AG04449 (cell line): ENCODE measurements at regions of chr5 and their contacts with region 1.

Region 1: DNA sequence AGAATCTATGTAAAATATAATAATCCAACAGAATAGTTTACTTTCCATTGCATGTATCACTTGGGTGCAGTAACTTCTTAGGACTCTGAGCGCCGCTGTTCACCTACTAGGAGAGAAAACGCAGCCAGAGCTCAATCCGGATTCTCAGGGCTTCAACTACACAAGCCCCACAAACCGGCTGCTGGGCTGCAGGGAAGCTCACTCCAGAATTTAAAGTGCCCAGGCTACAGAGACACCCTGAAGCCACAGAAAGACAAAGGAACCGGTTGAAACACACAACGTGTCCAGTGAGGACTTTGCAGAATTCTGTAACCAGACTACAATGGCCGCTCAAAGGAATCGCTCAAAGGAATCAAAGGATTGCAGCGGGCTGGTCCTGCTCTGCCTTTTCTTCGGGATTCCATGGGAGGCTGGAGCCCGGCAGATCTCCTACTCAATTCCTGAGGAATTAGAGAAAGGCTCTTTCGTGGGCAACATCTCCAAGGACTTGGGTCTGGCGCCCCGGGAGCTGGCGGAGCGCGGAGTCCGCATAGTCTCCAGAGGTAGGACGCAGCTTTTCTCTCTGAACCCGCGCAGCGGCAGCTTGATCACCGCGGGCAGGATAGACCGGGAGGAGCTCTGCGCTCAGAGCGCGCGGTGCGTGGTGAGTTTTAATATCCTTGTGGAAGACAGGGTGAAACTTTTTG is at the start of gene PCDHGA10:
- DNase-seq: no peak
- H3K4me3 ChIP-seq: peak within 1 kb of the TSS; percentile 53
- CTCF ChIP-seq: peak; percentile 48

Region 2: GRCh38 chr5:141320225-141321169 is 92.5 kb before region 1 on chr5 and contains the start of gene TAF7:
- CTCF ChIA-PET with region 1: interaction called, 10 read pairs
- POLR2A ChIA-PET with region 1: no interaction called
- DNase-seq: peak; percentile 63
- H3K4me3 ChIP-seq: peak within 1 kb of the TSS; percentile 85
- CTCF ChIP-seq: peak; percentile 82

Region 3: GRCh38 chr5:141387233-141387949 is 25.6 kb before region 1 on chr5 and contains the start of gene PCDHGB4:
- CTCF ChIA-PET with region 1: interaction called, 11 read pairs
- POLR2A ChIA-PET with region 1: no interaction called
- DNase-seq: no peak
- H3K4me3 ChIP-seq: peak within 1 kb of the TSS; percentile 42
- CTCF ChIP-seq: peak; percentile 33

Region 4: DNA sequence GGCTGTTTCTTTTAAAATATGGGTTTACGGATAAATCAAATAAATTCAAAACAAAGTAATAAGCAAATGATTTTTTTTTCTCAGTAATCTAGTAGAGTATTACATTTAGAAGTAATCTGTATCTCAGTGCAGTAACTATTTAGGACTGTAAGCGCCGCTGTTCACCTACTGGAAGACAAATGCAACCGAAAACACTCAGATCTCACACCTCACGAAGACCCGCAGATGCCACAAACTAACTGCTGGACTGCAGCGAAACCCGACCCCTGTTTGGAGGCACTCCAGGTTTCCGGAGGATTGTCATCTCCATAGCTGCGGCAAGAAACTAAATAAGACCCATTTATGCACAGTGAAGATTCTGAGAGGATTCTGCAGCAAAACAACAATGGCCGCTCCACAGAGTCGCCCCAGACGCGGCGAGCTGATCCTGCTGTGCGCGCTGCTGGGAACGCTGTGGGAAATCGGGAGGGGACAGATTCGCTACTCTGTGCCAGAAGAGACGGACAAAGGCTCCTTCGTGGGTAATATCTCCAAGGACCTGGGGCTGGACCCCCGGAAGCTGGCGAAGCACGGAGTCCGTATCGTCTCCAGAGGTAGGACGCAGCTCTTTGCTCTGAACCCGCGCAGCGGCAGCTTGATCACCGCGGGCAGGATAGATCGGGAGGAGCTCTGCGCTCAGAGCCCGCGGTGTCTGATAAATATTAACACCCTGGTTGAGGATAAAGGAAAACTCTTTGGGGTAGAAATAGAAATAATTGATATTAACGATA is 20.4 kb before region 1 on chr5 and contains the start of gene PCDHGA8:
- CTCF ChIA-PET with region 1: interaction called, 35 read pairs
- POLR2A ChIA-PET with region 1: no interaction called
- DNase-seq: no peak
- H3K4me3 ChIP-seq: 0 out of 2 replicates have a peak within 1 kb of the TSS, but pooled peaks have one; percentile 1
- CTCF ChIP-seq: no peak

Region 5: GRCh38 chr5:141402553-141403260 is 10.3 kb before region 1 on chr5 and contains the start of gene PCDHGA9:
- CTCF ChIA-PET with region 1: interaction called, 35 read pairs
- POLR2A ChIA-PET with region 1: no interaction called
- DNase-seq: no peak
- H3K4me3 ChIP-seq: peak within 1 kb of the TSS; percentile 34
- CTCF ChIP-seq: no peak

Region 6: DNA sequence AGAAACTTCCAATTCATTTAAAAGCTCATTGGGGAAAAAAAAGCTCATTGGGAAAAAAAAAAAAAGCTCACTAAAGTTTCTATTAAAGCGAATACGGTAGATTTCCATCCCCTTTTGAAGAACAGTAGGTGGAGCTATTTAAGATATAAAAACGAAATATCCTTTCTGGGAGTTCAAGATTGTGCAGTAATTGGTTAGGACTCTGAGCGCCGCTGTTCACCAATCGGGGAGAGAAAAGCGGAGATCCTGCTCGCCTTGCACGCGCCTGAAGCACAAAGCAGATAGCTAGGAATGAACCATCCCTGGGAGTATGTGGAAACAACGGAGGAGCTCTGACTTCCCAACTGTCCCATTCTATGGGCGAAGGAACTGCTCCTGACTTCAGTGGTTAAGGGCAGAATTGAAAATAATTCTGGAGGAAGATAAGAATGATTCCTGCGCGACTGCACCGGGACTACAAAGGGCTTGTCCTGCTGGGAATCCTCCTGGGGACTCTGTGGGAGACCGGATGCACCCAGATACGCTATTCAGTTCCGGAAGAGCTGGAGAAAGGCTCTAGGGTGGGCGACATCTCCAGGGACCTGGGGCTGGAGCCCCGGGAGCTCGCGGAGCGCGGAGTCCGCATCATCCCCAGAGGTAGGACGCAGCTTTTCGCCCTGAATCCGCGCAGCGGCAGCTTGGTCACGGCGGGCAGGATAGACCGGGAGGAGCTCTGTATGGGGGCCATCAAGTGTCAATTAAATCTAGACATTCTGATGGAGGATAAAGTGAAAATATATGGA is 17.5 kb after region 1 on chr5 and contains the start of gene PCDHGA12:
- CTCF ChIA-PET with region 1: interaction called, 196 read pairs
- POLR2A ChIA-PET with region 1: no interaction called
- DNase-seq: peak; percentile 52
- H3K4me3 ChIP-seq: peak within 1 kb of the TSS; percentile 49
- CTCF ChIP-seq: peak; percentile 38

Region 7: DNA sequence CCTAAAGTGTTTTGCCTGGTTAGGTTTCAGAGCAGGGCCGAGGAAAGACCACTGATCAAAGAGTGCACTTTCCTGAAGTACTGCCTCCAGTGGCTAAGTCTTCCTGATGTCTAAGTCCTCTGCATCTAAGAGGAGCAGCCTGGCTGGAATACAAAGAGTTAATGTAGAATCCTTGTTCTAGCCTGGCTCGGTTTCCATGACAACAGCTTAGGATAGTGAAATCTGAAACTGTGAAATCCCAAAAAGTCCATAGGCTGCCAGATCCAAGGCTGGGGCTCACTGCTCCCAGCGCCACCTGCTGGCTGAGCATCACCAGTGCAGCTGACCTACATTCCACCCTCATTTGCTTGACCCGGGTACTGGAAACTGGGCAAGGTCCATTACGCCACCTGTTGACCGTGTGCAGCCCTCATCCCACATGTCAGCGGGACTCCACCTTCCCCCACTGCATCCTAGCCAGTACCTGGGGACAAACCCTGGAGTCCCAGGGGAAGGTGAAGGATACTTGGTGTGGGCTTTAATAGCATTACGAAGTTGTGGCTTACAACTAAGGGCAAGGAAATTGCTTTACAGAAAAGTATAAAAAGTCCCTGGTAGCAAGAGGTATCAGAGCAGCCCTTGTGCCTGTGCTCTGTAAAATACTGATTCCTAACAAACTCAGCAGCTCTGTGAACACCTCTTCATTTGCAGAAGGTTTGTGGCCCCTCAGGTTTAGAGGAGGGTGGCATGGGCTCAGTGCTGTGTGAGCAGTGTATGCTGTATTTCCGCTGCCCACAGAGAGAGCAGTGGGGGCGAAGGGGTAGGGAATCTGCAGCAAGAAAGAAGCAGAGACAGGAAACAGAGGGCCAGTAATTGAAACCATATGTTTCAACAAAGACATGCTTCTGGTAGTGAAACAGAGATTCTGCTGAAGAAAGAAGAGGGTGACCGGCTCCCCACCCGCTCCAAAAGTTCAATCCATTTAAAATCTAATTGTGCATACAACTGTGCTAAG is 111.9 kb after region 1 on chr5:
- CTCF ChIA-PET with region 1: interaction called, 295 read pairs
- POLR2A ChIA-PET with region 1: interaction called, 4 read pairs
- DNase-seq: peak; percentile 76
- H3K4me3 ChIP-seq: peak overlapping the region; percentile 29
- CTCF ChIP-seq: peak; percentile 97